MCF 10A (cell line): ENCODE measurements at regions of chr10 and their contacts with region 1.

Region 1: DNA sequence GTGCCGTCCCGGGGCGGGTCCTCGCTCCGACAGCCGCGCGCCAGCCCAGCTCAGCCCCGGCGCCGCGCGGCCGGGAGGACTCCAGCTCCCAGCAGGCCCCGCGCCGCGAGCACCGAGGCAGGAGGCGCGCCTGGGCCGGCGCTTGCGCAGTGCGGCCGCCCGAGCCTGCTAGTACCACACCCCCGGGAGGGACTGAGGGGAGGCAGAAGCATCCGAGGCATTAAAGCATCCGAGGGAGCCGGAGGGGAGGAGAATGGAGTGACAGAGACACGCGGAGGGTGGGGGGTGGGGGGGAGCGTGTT is at the start of gene GRK5:
- DNase-seq: peak; percentile 93
- H3K4me3 Mint-ChIP-seq: peak within 1 kb of the TSS; percentile 72
- H3K27ac Mint-ChIP-seq: peak within 1 kb of the TSS; percentile 70
- H3K4me1 Mint-ChIP-seq: peaks cover 11% of the 10 kb centered on the region
- H3K27me3 Mint-ChIP-seq: no peaks in the 10 kb centered on the region
- CTCF ChIP-seq: no peak
- total RNA-seq, gene GRK5: 0.82 and 1.2 TPM in 2 replicates

Region 2: DNA sequence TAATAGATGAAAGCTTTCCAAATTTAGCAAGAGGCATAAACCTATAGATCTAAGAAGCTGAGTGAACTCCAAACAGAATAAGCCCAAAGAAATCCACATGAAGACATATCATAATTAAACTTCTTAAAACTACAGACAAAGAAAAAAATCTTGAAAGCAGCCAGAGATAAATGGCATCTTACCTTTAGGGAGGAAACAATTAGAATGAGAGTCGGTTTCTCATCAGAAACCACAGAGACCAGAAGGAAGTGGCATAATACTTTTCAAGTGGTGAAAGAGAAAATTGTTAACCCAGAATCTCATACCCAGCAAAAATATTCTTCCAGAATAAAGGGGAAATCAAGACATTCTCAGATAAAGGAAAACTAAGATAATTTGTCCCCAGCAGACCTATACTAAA is 276.7 kb before region 1 on chr10:
- CTCF ChIA-PET with region 1: no interaction called
- POLR2A ChIA-PET with region 1: no interaction called
- intact Hi-C with region 1: no loop called
- DNase-seq: no peak
- H3K4me3 Mint-ChIP-seq: no peak overlapping the region
- H3K27ac Mint-ChIP-seq: no peak overlapping the region
- H3K4me1 Mint-ChIP-seq: no peaks in the 10 kb centered on the region
- H3K27me3 Mint-ChIP-seq: no peaks in the 10 kb centered on the region
- CTCF ChIP-seq: no peak

Region 3: GRCh38 chr10:119189811-119190282 is 17.5 kb before region 1 on chr10:
- CTCF ChIA-PET with region 1: interaction called, 3 read pairs
- POLR2A ChIA-PET with region 1: interaction called, 14 read pairs
- intact Hi-C with region 1: no loop called
- DNase-seq: no peak
- H3K4me3 Mint-ChIP-seq: no peak overlapping the region
- H3K27ac Mint-ChIP-seq: peak overlapping the region; percentile 73
- H3K4me1 Mint-ChIP-seq: peaks cover 18% of the 10 kb centered on the region
- H3K27me3 Mint-ChIP-seq: no peaks in the 10 kb centered on the region
- CTCF ChIP-seq: no peak

Region 4: GRCh38 chr10:119270762-119271366 is 63.5 kb after region 1 on chr10:
- CTCF ChIA-PET with region 1: interaction called, 5 read pairs
- POLR2A ChIA-PET with region 1: interaction called, 5 read pairs
- intact Hi-C with region 1: loop called (anchors 2 kb)
- DNase-seq: no peak
- H3K4me3 Mint-ChIP-seq: no peak overlapping the region
- H3K27ac Mint-ChIP-seq: peak overlapping the region; percentile 64
- H3K4me1 Mint-ChIP-seq: peaks cover 8% of the 10 kb centered on the region
- H3K27me3 Mint-ChIP-seq: no peaks in the 10 kb centered on the region
- CTCF ChIP-seq: no peak

Region 5: GRCh38 chr10:119416855-119417254 is 209.5 kb after region 1 on chr10:
- CTCF ChIA-PET with region 1: interaction called, 116 read pairs
- POLR2A ChIA-PET with region 1: interaction called, 7 read pairs
- intact Hi-C with region 1: loop called (anchors 1 kb)
- DNase-seq: peak; percentile 75
- H3K4me3 Mint-ChIP-seq: no peak overlapping the region
- H3K27ac Mint-ChIP-seq: no peak overlapping the region
- H3K4me1 Mint-ChIP-seq: no peaks in the 10 kb centered on the region
- H3K27me3 Mint-ChIP-seq: no peaks in the 10 kb centered on the region
- CTCF ChIP-seq: peak; percentile 76

Region 6: GRCh38 chr10:119542988-119543813 is 335.9 kb after region 1 on chr10:
- CTCF ChIA-PET with region 1: no interaction called
- POLR2A ChIA-PET with region 1: interaction called, 4 read pairs
- intact Hi-C with region 1: loop called (anchors 5 kb)
- DNase-seq: peak; percentile 51
- H3K4me3 Mint-ChIP-seq: peak overlapping the region; percentile 77
- H3K27ac Mint-ChIP-seq: peak overlapping the region; percentile 62
- H3K4me1 Mint-ChIP-seq: peaks cover 36% of the 10 kb centered on the region
- H3K27me3 Mint-ChIP-seq: no peaks in the 10 kb centered on the region
- CTCF ChIP-seq: peak; percentile 36